Kidney (tissue), 22 donors: ENCODE measurements at regions of chr4 and their contacts with region 1.

Region 1: GRCh38 chr4:83074086-83074704 is 39.2 kb downstream of the COPS4 start:
- DNase-seq: peak in 2 of 5 donors; percentile 56 to 81
- H3K4me3 ChIP-seq: no peak overlapping the region
- H3K27ac ChIP-seq: no peak overlapping the region
- H3K4me1 ChIP-seq: no peaks in the 10 kb centered on the region
- H3K27me3 ChIP-seq: no peaks in the 10 kb centered on the region
- CTCF ChIP-seq: peak; percentile 71

Region 2: GRCh38 chr4:82833696-82834313 is 240.4 kb before region 1 on chr4:
- intact Hi-C with region 1: no loop called
- DNase-seq: no peak
- H3K4me3 ChIP-seq: no peak overlapping the region
- H3K27ac ChIP-seq: no peak overlapping the region
- H3K4me1 ChIP-seq: no peaks in the 10 kb centered on the region
- H3K27me3 ChIP-seq: no peaks in the 10 kb centered on the region
- CTCF ChIP-seq: no peak

Region 3: GRCh38 chr4:83267121-83267829 is 193.1 kb after region 1 on chr4:
- intact Hi-C with region 1: loop called (anchors 10 kb)
- DNase-seq: no peak
- H3K4me3 ChIP-seq: no peak overlapping the region
- H3K27ac ChIP-seq: no peak overlapping the region
- H3K4me1 ChIP-seq: no peaks in the 10 kb centered on the region
- H3K27me3 ChIP-seq: no peaks in the 10 kb centered on the region
- CTCF ChIP-seq: no peak